A673 (cell line): ENCODE measurements at regions of chr16 and their contacts with region 1.

Region 1: GRCh38 chr16:15564604-15565339 is 78.2 kb downstream of the MARF1 start:
- DNase-seq: no peak
- H3K4me3 ChIP-seq: no peak overlapping the region
- H3K27ac ChIP-seq: no peak overlapping the region
- H3K4me1 ChIP-seq: no peaks in the 10 kb centered on the region
- H3K27me3 ChIP-seq: no peaks in the 10 kb centered on the region
- CTCF ChIP-seq: no peak

Region 2: GRCh38 chr16:15542261-15542660 is 22.5 kb before region 1 on chr16:
- CTCF ChIA-PET with region 1: interaction called, 15 read pairs
- POLR2A ChIA-PET with region 1: no interaction called
- intact Hi-C with region 1: no loop called
- DNase-seq: peak; percentile 33
- H3K4me3 ChIP-seq: no peak overlapping the region
- H3K27ac ChIP-seq: no peak overlapping the region
- H3K4me1 ChIP-seq: no peaks in the 10 kb centered on the region
- H3K27me3 ChIP-seq: no peaks in the 10 kb centered on the region
- CTCF ChIP-seq: no peak

Region 3: GRCh38 chr16:15739950-15740349 is 175.2 kb after region 1 on chr16:
- CTCF ChIA-PET with region 1: no interaction called
- POLR2A ChIA-PET with region 1: no interaction called
- intact Hi-C with region 1: no loop called
- DNase-seq: no peak
- H3K4me3 ChIP-seq: no peak overlapping the region
- H3K27ac ChIP-seq: no peak overlapping the region
- H3K4me1 ChIP-seq: peaks cover 5% of the 10 kb centered on the region
- H3K27me3 ChIP-seq: no peaks in the 10 kb centered on the region
- CTCF ChIP-seq: no peak